Activated naive CD4-positive, alpha-beta T cell treated with anti-CD3 and anti-CD28 coated beads for 36 hours (primary cell): ENCODE measurements at regions of chr19 and their contacts with region 1.

Region 1: DNA sequence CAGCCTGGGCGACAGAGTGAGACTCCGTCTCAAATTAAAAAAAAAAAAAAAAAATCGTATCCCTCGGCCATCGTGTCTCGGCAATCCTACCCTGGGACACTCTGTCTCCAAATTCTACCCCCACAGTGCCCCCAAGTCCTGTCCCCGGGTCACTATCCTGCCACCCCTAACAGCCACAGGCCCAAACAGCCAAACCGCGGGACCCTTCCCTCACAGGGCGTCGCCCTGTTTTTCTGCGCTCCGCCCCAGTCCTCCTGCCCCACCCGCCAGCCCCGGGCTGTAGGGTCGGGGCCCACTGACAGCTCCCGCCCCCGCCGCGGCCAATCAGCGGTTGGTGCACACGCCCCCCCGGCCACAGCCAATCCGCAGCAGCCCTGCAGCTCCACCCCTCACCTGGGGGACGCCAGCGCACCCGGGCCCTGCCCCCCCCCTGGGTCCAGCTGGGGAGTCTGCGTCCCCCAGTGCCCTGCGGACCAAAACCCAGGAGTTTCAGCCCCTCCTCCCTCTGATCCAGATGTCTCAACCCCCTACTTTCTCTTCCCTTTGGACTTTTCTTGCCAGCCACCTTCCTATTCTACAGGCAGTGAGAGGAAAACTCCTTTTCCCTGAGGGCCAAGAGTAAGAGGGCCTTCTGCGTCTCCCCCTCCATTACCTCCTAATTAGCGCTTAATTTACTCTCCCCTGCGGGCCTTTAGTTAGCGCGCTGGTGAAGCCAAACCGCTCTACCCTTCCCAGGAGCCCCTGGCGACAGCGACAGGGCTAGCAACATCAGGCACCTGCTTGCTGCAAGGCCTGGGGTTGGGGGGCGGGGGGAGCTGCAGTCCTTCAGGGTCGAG is 1.5 kb upstream of the BCAT2 start:
- DNase-seq: peak; percentile 52
- H3K4me3 Mint-ChIP-seq: peak overlapping the region; percentile 68
- H3K27ac Mint-ChIP-seq: no peak overlapping the region
- H3K4me1 Mint-ChIP-seq: peaks cover 31% of the 10 kb centered on the region
- H3K27me3 Mint-ChIP-seq: no peaks in the 10 kb centered on the region

Region 2: GRCh38 chr19:48835734-48836088 is 23.4 kb after region 1 on chr19:
- CTCF ChIA-PET with region 1: interaction called, 5 read pairs
- intact Hi-C with region 1: loop called (anchors 2 kb)
- DNase-seq: peak; percentile 98
- H3K4me3 Mint-ChIP-seq: peak overlapping the region; percentile 73
- H3K27ac Mint-ChIP-seq: no peak overlapping the region
- H3K4me1 Mint-ChIP-seq: peaks cover 20% of the 10 kb centered on the region
- H3K27me3 Mint-ChIP-seq: peaks cover 2% of the 10 kb centered on the region

Region 3: DNA sequence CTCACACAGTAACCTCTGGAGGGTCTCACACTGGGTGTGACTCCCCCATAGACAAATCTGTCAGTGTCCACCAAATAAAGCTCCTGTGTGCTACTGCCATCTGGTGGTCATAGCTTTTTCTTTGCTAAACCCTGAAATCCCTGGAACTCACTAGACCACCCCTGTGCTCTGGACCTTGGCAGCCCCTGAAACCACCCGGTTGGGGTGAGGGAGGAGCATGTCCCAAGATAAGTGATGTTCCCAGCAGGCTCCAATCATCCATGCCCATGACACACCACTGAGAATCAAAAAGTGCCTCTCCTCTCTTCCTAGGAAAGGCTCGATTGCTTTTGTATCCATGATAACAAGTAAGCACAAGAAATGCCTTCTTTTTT is 30.5 kb after region 1 on chr19:
- CTCF ChIA-PET with region 1: interaction called, 10 read pairs
- intact Hi-C with region 1: no loop called
- DNase-seq: peak; percentile 70
- H3K4me3 Mint-ChIP-seq: no peak overlapping the region
- H3K27ac Mint-ChIP-seq: no peak overlapping the region
- H3K4me1 Mint-ChIP-seq: no peaks in the 10 kb centered on the region
- H3K27me3 Mint-ChIP-seq: no peaks in the 10 kb centered on the region